Naive thymus-derived CD8-positive, alpha-beta T cell (primary cell): ENCODE measurements at regions of chr14 and their contacts with region 1.

Region 1: DNA sequence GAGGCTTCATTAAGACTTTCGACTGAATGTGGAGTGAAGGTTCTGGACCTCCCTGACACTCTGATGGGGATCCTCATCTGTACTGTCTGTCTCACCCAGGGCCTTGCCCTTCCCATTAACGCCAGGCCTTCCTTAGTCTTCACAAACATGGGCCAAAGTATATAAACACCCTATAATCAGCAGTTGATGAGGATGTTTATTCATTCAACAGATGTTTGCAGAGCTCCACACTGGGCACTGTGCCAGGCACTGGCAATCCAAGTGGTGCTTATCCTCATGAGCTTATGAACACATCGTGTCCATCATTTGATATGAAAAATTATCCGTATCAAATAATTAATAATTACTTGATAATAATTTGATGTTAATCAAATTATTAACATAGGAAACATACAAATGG is 454.4 kb downstream of the FUT8 start:
- DNase-seq: no peak
- ATAC-seq: no peak
- H3K4me3 Mint-ChIP-seq: no peak overlapping the region
- H3K27ac Mint-ChIP-seq: peak overlapping the region in 1 of 10 donors; percentile 51
- H3K4me1 Mint-ChIP-seq: peaks cover 33 to 49% (median 41%) of the 10 kb centered on the region in 4 donors
- H3K27me3 Mint-ChIP-seq: no peaks in the 10 kb centered on the region

Region 2: DNA sequence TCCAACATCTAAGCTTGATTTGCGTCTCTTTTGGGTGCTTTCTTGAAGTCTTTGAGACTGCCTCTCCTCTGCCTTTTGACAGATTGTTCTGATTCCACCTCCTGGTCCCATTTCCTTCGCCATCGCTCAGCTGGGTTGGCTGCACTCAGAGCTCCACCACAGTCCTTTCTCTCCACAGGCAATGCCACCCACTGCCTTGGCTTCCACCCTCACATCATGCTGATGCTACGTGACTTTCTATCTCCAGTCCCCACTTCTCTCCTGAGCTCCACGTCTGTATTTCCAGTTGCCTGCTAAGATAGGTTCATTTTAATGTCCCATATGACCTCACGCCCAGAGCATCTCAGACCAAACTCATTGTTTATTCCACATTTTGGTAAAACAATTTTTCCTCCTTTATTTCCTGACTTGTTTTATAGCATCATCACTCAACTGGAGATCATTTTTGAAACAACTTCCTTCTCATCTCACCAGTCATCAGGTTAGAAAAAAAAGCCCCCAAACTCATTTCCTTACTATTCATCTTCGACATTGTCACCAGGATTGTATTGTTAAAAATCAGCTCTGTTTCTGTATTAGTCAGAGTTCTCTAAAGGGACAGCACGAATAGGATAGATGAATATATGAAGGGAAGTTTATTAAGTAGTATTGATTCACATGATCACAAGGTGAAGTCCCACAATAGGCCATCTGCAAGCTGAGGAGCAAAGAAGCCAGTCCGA is 62.0 kb before region 1 on chr14:
- POLR2A ChIA-PET with region 1: no interaction called
- DNase-seq: no peak
- ATAC-seq: no peak
- H3K4me3 Mint-ChIP-seq: no peak overlapping the region
- H3K27ac Mint-ChIP-seq: no peak overlapping the region
- H3K4me1 Mint-ChIP-seq: no peaks in the 10 kb centered on the region
- H3K27me3 Mint-ChIP-seq: no peaks in the 10 kb centered on the region

Region 3: GRCh38 chr14:65879248-65880009 is 12.5 kb after region 1 on chr14:
- POLR2A ChIA-PET with region 1: interaction called, 10 read pairs
- DNase-seq: no peak
- ATAC-seq: peak in 1 of 2 donors; percentile 26
- H3K4me3 Mint-ChIP-seq: no peak overlapping the region
- H3K27ac Mint-ChIP-seq: peak overlapping the region; percentile 1 to 81 (median 52)
- H3K4me1 Mint-ChIP-seq: peaks cover 10 to 33% (median 20%) of the 10 kb centered on the region in 4 donors
- H3K27me3 Mint-ChIP-seq: no peaks in the 10 kb centered on the region